ENCODE measurements at regions of chr1 and their contacts with region 1.

Region 1: GRCh38 chr1:48817505-48818114 is 40.9 kb upstream of the BEND5 start:
- DNase-seq: peak; percentile 56
- H3K4me3 Mint-ChIP-seq: no peak overlapping the region
- H3K27ac Mint-ChIP-seq: no peak overlapping the region
- H3K4me1 Mint-ChIP-seq: no peaks in the 10 kb centered on the region
- H3K27me3 Mint-ChIP-seq: peaks cover 5% of the 10 kb centered on the region

Region 2: DNA sequence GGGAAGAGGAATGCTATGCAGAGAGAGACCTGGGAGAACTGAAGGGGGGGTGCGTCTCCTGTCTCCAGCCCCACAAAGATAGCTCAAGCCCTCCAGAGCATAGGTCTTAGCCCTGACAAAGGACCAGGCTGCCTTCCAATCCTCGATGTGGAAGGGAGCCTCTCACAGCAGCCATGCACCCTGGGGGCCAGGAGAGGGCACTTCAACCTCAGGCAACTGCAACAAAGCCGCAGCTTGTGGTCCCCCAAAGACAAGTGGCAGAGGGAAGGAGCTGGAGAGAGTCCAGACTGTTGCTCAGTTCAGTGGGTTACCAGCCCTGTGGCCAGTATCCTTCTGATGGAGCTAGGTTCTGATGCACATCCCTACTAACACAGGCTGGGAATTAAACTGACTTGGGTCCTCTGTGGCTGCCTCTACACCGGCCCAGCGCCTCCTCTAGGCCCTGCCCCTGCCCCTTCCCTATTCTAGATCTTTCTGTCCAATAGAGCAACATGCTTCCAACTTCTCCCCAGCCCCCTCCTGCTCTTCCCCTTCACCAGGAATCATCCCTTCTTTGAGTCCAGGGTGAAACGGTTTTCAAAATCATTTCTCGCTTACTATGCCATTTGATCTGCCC is 244.9 kb before region 1 on chr1:
- CTCF ChIA-PET with region 1: no interaction called
- intact Hi-C with region 1: loop called (anchors 2 kb)
- DNase-seq: peak; percentile 38
- H3K4me3 Mint-ChIP-seq: no peak overlapping the region
- H3K27ac Mint-ChIP-seq: no peak overlapping the region
- H3K4me1 Mint-ChIP-seq: no peaks in the 10 kb centered on the region
- H3K27me3 Mint-ChIP-seq: peaks cover 14% of the 10 kb centered on the region

Region 3: DNA sequence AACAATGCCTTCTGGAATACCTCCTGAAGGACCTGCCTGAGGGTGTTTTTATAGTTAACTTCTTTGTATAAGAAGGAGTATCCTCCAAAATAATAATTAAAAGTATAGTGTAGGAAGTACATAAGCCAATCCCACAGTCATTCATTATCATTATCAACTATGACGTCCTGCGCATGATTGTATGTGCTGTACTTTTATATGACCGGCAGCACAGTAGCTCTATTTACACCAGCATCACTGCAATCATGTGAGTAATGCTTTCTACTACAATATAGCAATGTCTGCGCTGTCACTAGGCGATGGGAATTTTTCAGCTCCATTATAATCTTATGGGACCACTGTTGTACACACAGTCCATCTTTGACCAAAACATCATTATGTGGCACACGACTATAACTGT is 112.9 kb before region 1 on chr1:
- CTCF ChIA-PET with region 1: no interaction called
- intact Hi-C with region 1: loop called (anchors 5 kb)
- DNase-seq: no peak
- H3K4me3 Mint-ChIP-seq: no peak overlapping the region
- H3K27ac Mint-ChIP-seq: no peak overlapping the region
- H3K4me1 Mint-ChIP-seq: no peaks in the 10 kb centered on the region
- H3K27me3 Mint-ChIP-seq: peaks cover 4% of the 10 kb centered on the region

Region 4: DNA sequence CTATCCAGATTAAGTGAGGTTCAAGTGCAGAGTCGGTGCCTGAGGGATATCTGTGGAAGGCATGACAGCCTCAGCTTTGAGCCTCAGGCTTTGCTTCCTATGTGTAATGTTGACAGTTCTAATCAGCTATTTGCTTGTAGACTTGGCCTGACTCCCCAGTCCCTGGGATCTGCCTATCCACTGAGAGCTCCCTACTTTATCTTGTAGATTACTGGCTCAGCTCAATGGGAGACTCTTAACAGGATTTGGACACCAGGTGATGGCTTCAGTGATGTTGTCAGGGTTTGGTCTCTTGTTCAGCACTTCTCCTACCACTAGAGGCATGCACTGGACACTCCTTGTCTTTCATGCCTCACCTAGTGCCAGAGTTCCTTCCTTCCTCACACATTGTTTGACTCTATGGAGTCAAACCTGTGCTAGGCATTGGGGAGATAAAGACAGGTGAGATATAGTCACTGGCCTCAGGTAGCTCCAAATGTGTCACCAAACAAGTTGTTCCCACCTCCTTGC is 85.7 kb after region 1 on chr1:
- CTCF ChIA-PET with region 1: no interaction called
- intact Hi-C with region 1: no loop called
- DNase-seq: no peak
- H3K4me3 Mint-ChIP-seq: no peak overlapping the region
- H3K27ac Mint-ChIP-seq: no peak overlapping the region
- H3K4me1 Mint-ChIP-seq: no peaks in the 10 kb centered on the region
- H3K27me3 Mint-ChIP-seq: peaks cover 30% of the 10 kb centered on the region

Region 5: GRCh38 chr1:50343323-50343722 is 1525.7 kb after region 1 on chr1:
- CTCF ChIA-PET with region 1: no interaction called
- intact Hi-C with region 1: no loop called
- DNase-seq: no peak
- H3K4me3 Mint-ChIP-seq: no peak overlapping the region
- H3K27ac Mint-ChIP-seq: no peak overlapping the region
- H3K4me1 Mint-ChIP-seq: no peaks in the 10 kb centered on the region
- H3K27me3 Mint-ChIP-seq: peaks cover 14% of the 10 kb centered on the region

Measured in activated naive CD4-positive, alpha-beta T cell treated with anti-CD3 and anti-CD28 coated beads for 36 hours (primary cell).